ENCODE measurements at regions of chr12 and their contacts with region 1.

Region 1: GRCh38 chr12:11581179-11581755 is 68.2 kb upstream of the ETV6 start:
- ATAC-seq: peak in 1 of 8 experiments; percentile 23
- H3K4me3 ChIP-seq: no peak overlapping the region
- H3K27ac ChIP-seq: no peak overlapping the region
- H3K4me1 ChIP-seq: no peaks in the 10 kb centered on the region

Region 2: GRCh38 chr12:12024911-12025682 is 443.8 kb after region 1 on chr12:
- in situ Hi-C with region 1: loop called in 8 of 9 experiments (anchors 10 to 25 kb)
- ATAC-seq: no peak
- H3K4me3 ChIP-seq: no peak overlapping the region
- H3K27ac ChIP-seq: no peak overlapping the region
- H3K4me1 ChIP-seq: no peaks in the 10 kb centered on the region

Region 3: DNA sequence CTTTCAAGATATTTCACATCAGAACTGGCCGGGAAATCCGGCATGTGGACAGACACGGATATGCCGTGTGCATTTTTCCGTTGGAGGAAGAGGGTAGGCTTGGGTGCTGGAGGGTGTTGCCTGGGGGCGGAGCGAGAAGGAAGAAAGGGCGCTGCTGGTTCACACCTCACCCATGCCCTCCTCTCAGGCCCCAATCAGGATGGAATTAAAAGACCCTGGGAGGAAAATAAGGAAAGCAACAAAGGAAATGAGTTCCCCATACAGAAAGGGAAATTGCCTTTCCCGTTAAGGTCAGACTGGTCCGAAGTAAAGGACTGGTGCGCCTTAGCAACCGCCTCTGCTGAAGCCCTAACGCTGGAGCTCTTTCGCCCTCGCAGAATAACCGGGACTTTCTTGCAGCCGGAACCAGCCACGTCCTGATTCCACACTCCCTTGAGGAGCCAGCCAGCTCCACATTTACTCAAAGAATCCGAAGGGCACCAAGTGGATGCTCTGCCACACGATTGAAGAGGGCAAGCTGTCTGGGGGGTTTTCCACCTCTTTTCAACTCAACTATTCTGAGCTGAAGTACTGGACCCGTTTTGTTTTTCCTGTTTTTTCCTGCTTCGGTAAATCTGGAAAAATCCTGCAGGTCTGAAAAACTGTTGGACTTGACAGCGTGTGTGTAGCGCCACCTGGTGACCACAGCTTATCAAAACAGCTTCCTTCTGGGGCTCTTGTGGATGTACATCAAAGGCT is 451.8 kb after region 1 on chr12:
- in situ Hi-C with region 1: loop called (anchors 5 to 25 kb)
- ATAC-seq: peak; percentile 70 to 93 (median 90)
- H3K4me3 ChIP-seq: peak overlapping the region; percentile 12 to 35 (median 20)
- H3K27ac ChIP-seq: peak overlapping the region in 1 of 2 donors; percentile 67
- H3K4me1 ChIP-seq: peaks cover 6% of the 10 kb centered on the region in 2 donors

Region 4: GRCh38 chr12:12282761-12283425 is 701.6 kb after region 1 on chr12:
- in situ Hi-C with region 1: no loop called
- ATAC-seq: peak; percentile 15 to 80 (median 61)
- H3K4me3 ChIP-seq: no peak overlapping the region
- H3K27ac ChIP-seq: no peak overlapping the region
- H3K4me1 ChIP-seq: peaks cover 13 to 16% of the 10 kb centered on the region in 2 donors

Region 5: DNA sequence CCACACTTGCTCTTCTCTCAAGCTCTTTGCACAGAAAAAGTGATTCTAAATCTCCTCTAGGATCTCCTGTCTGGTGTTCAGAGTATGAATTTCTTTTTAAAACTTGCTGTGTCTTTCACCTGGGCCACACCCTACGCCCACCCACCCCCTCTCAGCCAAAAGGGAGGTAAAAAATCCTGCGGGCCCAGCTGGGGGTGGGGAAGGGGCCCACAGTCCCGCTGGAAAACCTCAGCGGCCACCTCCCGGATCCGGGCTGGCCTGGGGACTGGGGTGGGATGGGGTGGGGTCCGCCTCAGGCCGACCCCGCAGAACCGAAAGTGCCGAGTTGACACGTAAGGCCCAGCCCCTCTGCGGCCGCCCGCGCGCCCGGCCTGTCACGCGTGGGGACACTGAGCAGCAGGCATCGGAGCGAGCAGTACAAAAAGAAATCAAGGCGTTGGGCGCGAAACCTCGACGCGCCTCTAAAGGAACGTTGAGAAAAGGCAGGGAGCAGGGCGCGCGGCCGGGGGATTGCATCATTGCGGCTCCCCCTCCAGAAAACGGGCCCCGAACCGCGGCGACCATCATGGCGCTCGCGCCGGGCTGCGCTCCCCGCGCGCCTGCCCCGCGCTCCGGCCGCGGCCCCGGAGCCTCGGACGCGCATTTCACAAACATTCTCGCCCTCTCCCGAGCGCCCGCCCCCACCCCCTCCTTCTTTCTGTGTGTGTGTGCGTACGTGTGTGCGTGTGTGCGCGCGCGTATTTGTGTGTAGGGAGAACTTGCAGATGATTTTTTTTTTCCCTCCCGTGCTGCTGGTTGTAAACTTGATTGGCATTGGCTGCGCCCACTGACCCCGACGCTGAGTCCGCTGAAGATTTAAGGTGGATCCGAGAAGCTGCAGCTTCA is 1143.6 kb after region 1 on chr12:
- in situ Hi-C with region 1: loop called in 1 of 9 experiments (anchors 25 kb)
- ATAC-seq: peak; percentile 76 to 82 (median 78)
- H3K4me3 ChIP-seq: peak overlapping the region; percentile 57 to 77 (median 63)
- H3K27ac ChIP-seq: peak overlapping the region; percentile 92 to 95
- H3K4me1 ChIP-seq: peaks cover 0 to 2% of the 10 kb centered on the region in 2 donors